ENCODE measurements at regions of chr6 and their contacts with region 1.

Region 1: DNA sequence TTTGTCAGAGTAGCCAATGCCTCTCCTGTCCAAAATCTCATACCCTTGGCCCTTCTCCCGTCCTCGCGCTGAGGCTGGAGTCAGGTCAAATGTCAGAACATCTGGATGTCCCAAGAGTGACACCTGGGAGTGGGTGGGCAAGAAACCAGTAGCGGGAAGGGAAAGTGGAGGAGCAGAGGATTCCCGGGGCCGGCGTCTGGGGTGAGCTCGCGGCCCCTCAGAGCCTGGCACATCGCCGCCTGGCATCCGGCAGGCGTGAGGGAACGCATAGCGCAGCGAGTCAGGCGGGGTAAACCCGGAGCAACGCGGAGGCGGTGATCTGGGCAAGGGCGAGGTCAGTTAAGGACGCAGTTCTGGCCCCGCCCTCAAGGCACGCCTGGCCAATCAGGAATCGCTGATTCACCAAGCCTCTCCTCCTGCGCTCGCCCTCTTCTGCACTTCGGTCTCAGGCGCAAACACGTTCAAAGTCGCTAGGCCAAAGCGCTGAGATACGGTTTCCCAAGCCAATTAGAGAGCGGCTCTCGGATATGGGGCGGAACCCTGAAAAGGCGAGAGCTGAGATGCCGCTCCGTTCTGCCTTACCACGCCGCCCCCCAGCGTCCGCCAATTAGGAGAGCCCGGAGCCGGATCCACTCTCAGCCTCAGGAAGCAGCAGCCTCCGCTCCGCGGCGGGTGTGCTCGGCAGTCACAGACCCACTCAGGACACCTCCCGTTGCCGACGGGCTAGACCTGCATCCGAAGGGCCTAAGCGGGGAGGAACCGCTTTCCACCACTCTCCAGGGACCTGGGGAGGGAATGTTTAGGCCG is 22.5 kb downstream of the VPS52 start:
- DNase-seq: peak; percentile 99
- ATAC-seq: peak; percentile 91
- H3K4me3 ChIP-seq: peak overlapping the region; percentile 74 to 85
- H3K27ac ChIP-seq: peak overlapping the region; percentile 90
- H3K4me1 ChIP-seq: peaks cover 16 to 37% of the 10 kb centered on the region in 2 experiments
- H3K27me3 ChIP-seq: no peaks in the 10 kb centered on the region
- CTCF ChIP-seq: no peak
- POLR2A ChIP-seq: peak; percentile 65
- RAD21 ChIP-seq: no peak

Region 2: DNA sequence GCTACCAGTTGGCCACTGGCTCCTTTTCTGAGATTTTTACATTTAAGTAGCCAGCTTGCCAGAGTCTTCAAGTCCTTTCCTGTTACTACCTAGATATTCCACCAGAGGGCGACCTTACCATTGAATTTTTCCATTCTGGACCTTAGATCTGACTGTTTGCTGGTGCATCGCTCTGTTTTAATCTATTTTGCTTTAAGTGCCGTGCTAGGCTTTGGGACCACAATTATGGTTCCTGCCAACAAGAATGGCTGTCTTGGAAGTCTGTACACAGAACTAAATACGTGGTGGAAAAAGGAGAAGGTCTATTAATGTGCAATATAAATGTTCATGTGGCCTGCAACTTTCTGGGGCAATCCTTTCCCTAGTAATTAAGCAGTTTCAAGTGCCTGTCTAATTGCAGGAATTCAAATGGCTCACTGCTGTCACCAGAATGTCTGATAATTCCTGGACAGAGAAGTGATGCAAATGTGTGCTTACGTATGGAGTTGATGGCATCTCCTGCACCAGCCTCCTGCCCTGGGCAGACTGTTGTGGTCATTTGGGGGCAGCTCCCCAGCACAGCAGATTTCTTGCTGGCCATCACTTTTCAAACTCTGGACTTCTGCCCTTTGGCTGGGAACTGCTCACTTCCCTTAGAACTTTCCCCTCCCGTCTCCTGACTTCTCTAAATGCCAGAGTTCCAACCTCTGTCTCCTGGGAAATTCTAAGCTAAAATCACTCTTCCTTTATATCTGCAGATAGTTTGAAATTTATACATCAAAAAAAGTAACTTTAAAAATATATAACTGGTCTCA is 234.1 kb before region 1 on chr6:
- CTCF ChIA-PET with region 1: interaction called, 23 read pairs
- POLR2A ChIA-PET with region 1: no interaction called
- RAD21 ChIA-PET with region 1: no interaction called
- intact Hi-C with region 1: loop called (anchors 1 kb)
- DNase-seq: peak; percentile 78
- ATAC-seq: peak; percentile 90
- H3K4me3 ChIP-seq: no peak overlapping the region
- H3K27ac ChIP-seq: no peak overlapping the region
- H3K4me1 ChIP-seq: peaks cover 0 to 3% of the 10 kb centered on the region in 2 experiments; a peak in 1 of 4 replicates
- H3K27me3 ChIP-seq: peaks cover 8% of the 10 kb centered on the region; the same call in 1 of the 2 replicates
- CTCF ChIP-seq: peak; percentile 55 to 91 (median 71)
- POLR2A ChIP-seq: no peak
- RAD21 ChIP-seq: peak; percentile 82

Region 3: DNA sequence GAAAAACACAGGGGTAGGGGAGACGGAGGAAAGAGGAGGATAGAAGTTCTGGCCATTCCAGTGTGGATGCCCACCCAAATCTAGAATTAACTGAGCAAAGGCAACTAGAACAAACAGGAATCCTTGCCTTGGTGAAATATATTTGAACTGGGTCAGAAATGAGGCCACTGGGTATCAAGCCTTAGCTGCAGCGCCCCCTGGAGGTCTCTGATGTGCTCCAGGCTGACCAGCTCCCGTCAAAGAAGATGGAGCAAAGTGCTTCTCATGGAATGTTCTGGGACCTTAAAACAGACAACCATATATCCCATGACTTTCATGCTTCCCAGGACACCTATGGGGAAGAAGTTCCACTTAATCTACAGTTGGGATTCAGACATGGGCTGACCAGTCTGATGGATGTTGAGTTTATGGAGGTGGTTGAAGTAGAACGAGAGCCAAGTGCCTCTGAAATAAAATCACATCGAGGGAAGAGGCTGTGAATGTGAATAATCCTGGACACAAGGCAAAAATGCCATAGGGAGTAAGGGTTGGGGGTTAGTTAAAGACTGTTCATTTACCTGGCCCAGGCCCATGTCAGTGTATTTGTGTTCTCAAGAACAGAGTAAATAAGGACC is 122.9 kb before region 1 on chr6:
- CTCF ChIA-PET with region 1: interaction called, 49 read pairs
- POLR2A ChIA-PET with region 1: interaction called, 3 read pairs
- RAD21 ChIA-PET with region 1: interaction called, 4 read pairs
- intact Hi-C with region 1: loop called (anchors 1 kb)
- DNase-seq: peak; percentile 35
- ATAC-seq: peak; percentile 65
- H3K4me3 ChIP-seq: no peak overlapping the region
- H3K27ac ChIP-seq: no peak overlapping the region
- H3K4me1 ChIP-seq: peaks cover 0 to 8% of the 10 kb centered on the region in 2 experiments; a peak in 1 of 4 replicates
- H3K27me3 ChIP-seq: no peaks in the 10 kb centered on the region
- CTCF ChIP-seq: peak; percentile 50 to 86 (median 85); a peak in 5 of 6 replicates
- POLR2A ChIP-seq: no peak
- RAD21 ChIP-seq: peak; percentile 36

Region 4: GRCh38 chr6:33200219-33201146 is 48.6 kb before region 1 on chr6 and contains the starts of genes RXRB and SLC39A7:
- CTCF ChIA-PET with region 1: interaction called, 10 read pairs
- POLR2A ChIA-PET with region 1: interaction called, 7 read pairs
- RAD21 ChIA-PET with region 1: interaction called in 1 of 2 experiments, 3 read pairs
- intact Hi-C with region 1: loop called (anchors 1 kb)
- DNase-seq: peak; percentile 98
- ATAC-seq: peak; percentile 61
- H3K4me3 ChIP-seq: peak within 1 kb of the TSS; percentile 63 to 69
- H3K27ac ChIP-seq: peak within 1 kb of the TSS; percentile 94
- H3K4me1 ChIP-seq: peaks cover 35 to 60% of the 10 kb centered on the region in 2 experiments
- H3K27me3 ChIP-seq: no peaks in the 10 kb centered on the region
- CTCF ChIP-seq: no peak
- POLR2A ChIP-seq: no peak
- RAD21 ChIP-seq: no peak
- total RNA-seq, gene RXRB: 49.9 TPM
- total RNA-seq, gene SLC39A7: 130 TPM

Region 5: GRCh38 chr6:33264015-33264414 is 14.9 kb after region 1 on chr6:
- CTCF ChIA-PET with region 1: interaction called, 33 read pairs
- POLR2A ChIA-PET with region 1: interaction called, 19 read pairs
- RAD21 ChIA-PET with region 1: no interaction called
- intact Hi-C with region 1: no loop called
- DNase-seq: no peak
- ATAC-seq: 0 out of 2 replicates have a peak, but pooled peaks have one; percentile 12
- H3K4me3 ChIP-seq: no peak overlapping the region
- H3K27ac ChIP-seq: no peak overlapping the region; the same call in 1 of the 2 replicates
- H3K4me1 ChIP-seq: peaks cover 18 to 32% of the 10 kb centered on the region in 2 experiments
- H3K27me3 ChIP-seq: no peaks in the 10 kb centered on the region
- CTCF ChIP-seq: no peak
- POLR2A ChIP-seq: no peak
- RAD21 ChIP-seq: no peak

Region 6: GRCh38 chr6:33276864-33277662 is 27.9 kb after region 1 on chr6 and contains the start of gene B3GALT4:
- CTCF ChIA-PET with region 1: no interaction called
- POLR2A ChIA-PET with region 1: interaction called, 24 read pairs
- RAD21 ChIA-PET with region 1: no interaction called
- intact Hi-C with region 1: no loop called
- DNase-seq: no peak
- ATAC-seq: peak; percentile 65
- H3K4me3 ChIP-seq: peak within 1 kb of the TSS; percentile 34 to 99
- H3K27ac ChIP-seq: peak within 1 kb of the TSS; percentile 82
- H3K4me1 ChIP-seq: peaks cover 43 to 68% of the 10 kb centered on the region in 2 experiments
- H3K27me3 ChIP-seq: no peaks in the 10 kb centered on the region
- CTCF ChIP-seq: peak in 2 of 3 experiments; percentile 46 to 63; a peak in 4 of 6 replicates
- POLR2A ChIP-seq: peak; percentile 81
- RAD21 ChIP-seq: no peak
- total RNA-seq, gene B3GALT4: 1.9 TPM

Region 7: DNA sequence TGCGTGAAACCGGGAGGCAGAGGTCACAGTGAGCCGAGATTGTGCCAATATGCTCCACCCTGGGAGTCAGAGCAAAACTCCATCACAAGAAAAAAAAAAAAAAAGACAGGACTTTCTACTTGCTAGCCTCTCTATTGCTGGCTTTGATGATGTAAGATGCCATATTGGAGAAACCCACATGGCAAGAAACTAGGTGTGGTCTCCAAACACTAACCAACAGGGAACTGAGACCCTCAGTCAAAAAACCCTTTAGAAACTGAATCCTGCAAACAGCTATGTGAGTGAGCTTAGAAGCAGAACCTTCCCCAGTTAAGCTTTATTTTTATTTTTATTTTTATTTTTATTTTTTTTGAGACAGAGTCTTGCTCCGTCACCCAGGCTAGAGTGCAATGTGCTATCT is 86.8 kb after region 1 on chr6:
- CTCF ChIA-PET with region 1: no interaction called
- POLR2A ChIA-PET with region 1: no interaction called
- RAD21 ChIA-PET with region 1: no interaction called
- intact Hi-C with region 1: no loop called
- DNase-seq: no peak
- ATAC-seq: no peak
- H3K4me3 ChIP-seq: no peak overlapping the region
- H3K27ac ChIP-seq: no peak overlapping the region
- H3K4me1 ChIP-seq: no peaks in the 10 kb centered on the region
- H3K27me3 ChIP-seq: no peaks in the 10 kb centered on the region
- CTCF ChIP-seq: no peak
- POLR2A ChIP-seq: no peak
- RAD21 ChIP-seq: no peak

Measured in HCT116 (cell line).